ENCODE measurements at regions of chr20 and their contacts with region 1.

Region 1: DNA sequence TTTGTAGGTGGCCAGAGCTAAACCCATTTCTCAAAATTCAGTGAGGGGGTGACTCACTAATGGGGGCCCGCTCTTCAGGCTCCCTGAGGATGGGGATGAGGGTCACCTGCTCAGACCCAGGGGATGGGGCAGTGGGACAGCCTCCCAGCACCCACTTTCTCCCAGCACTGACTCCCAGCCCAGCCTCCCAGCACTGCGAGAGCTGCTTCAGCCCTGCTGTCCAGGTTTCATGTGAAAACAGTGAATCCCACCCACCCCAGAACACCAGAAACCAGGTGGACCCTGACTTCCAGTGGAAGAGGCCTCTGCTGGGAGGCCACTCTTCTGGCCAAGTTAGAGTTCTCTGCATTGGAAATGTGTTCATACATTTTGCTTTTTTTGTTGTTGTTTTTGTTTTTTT is 362.7 kb downstream of the CDH4 start:
- DNase-seq: no peak
- ATAC-seq: no peak
- H3K4me3 ChIP-seq: no peak overlapping the region
- H3K27ac ChIP-seq: no peak overlapping the region
- H3K4me1 ChIP-seq: no peaks in the 10 kb centered on the region
- H3K27me3 ChIP-seq: peaks cover 22% of the 10 kb centered on the region; the same call in 1 of the 2 replicates
- CTCF ChIP-seq: no peak

Region 2: GRCh38 chr20:61556116-61556515 is 58.6 kb before region 1 on chr20:
- CTCF ChIA-PET with region 1: no interaction called
- POLR2A ChIA-PET with region 1: no interaction called
- intact Hi-C with region 1: no loop called
- DNase-seq: no peak
- ATAC-seq: no peak
- H3K4me3 ChIP-seq: no peak overlapping the region
- H3K27ac ChIP-seq: no peak overlapping the region
- H3K4me1 ChIP-seq: no peaks in the 10 kb centered on the region
- H3K27me3 ChIP-seq: peaks cover 28% of the 10 kb centered on the region
- CTCF ChIP-seq: no peak

Region 3: GRCh38 chr20:61724376-61724775 is 109.6 kb after region 1 on chr20:
- CTCF ChIA-PET with region 1: no interaction called
- POLR2A ChIA-PET with region 1: interaction called, 13 read pairs
- intact Hi-C with region 1: no loop called
- DNase-seq: no peak
- ATAC-seq: no peak
- H3K4me3 ChIP-seq: no peak overlapping the region
- H3K27ac ChIP-seq: no peak overlapping the region
- H3K4me1 ChIP-seq: no peaks in the 10 kb centered on the region
- H3K27me3 ChIP-seq: peaks cover 48% of the 10 kb centered on the region
- CTCF ChIP-seq: peak; percentile 33; the same call in 1 of the 2 replicates

Measured in PC-3 (cell line).